ENCODE measurements at regions of chr6 and their contacts with region 1.

Region 1: DNA sequence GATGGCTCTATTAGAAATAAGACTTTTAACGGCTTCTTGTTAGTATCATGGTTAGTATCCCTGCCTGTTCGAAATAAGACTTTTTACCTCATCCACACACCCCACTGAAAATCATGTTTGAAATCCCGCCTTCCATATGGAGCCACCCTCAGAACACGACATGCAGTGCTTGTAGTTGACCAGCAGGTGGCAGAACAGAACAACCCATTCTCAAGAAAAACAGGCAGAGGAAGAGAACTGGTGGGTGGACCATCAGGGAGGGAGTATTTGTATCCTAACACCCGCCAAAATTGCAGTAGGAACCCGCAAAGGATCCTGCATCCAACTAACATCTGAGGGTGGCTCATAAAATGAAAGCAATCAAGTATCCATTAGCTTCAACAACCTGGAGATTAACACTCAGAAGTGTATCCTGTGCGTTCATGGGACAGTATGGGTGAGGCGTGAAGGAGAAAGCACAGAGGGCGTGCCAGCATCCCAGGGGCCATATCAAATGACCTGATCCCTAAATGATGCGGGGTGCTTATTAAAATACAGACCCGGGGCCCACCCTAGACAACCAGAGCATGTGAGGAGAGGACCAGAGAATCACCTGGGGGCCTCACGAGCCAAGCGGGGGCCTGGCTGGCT is 89.6 kb upstream of the NHSL1 start:
- DNase-seq: peak; percentile 76
- ATAC-seq: peak; percentile 68
- H3K4me3 ChIP-seq: no peak overlapping the region
- H3K4me3 Mint-ChIP-seq: no peak overlapping the region
- H3K27ac ChIP-seq: no peak overlapping the region
- H3K27ac Mint-ChIP-seq: no peak overlapping the region
- H3K4me1 ChIP-seq: peaks cover 12 to 13% of the 10 kb centered on the region in 2 donors
- H3K4me1 Mint-ChIP-seq: peaks cover 20% of the 10 kb centered on the region
- H3K27me3 ChIP-seq: no peaks in the 10 kb centered on the region
- H3K27me3 Mint-ChIP-seq: no peaks in the 10 kb centered on the region
- CTCF ChIP-seq: peak; percentile 92

Region 2: DNA sequence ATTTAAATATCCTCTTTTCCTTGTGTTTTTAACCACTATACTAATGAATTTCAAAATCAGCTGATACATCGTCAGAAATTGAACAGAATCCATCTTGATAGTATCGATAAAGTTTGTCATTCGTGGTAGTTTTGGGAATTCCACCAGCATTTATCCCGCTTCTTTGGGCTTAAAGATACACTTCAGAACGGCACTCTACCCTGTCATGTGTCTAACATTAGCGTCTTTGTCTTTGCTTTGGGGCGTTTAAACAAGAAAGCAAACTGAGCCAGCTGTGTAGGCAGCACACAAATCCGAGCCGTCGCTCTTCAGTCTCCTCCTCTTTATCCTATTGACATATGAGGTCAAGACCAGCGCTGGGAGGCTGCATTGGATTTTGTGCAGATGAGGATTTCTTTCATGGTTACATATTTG is 62.1 kb before region 1 on chr6:
- CTCF ChIA-PET with region 1: no interaction called
- POLR2A ChIA-PET with region 1: no interaction called
- intact Hi-C with region 1: no loop called
- DNase-seq: no peak
- ATAC-seq: no peak
- H3K4me3 ChIP-seq: no peak overlapping the region
- H3K4me3 Mint-ChIP-seq: no peak overlapping the region
- H3K27ac ChIP-seq: no peak overlapping the region
- H3K27ac Mint-ChIP-seq: no peak overlapping the region
- H3K4me1 ChIP-seq: no peaks in the 10 kb centered on the region
- H3K4me1 Mint-ChIP-seq: no peaks in the 10 kb centered on the region
- H3K27me3 ChIP-seq: no peaks in the 10 kb centered on the region
- H3K27me3 Mint-ChIP-seq: peaks cover 8% of the 10 kb centered on the region
- CTCF ChIP-seq: no peak

Region 3: DNA sequence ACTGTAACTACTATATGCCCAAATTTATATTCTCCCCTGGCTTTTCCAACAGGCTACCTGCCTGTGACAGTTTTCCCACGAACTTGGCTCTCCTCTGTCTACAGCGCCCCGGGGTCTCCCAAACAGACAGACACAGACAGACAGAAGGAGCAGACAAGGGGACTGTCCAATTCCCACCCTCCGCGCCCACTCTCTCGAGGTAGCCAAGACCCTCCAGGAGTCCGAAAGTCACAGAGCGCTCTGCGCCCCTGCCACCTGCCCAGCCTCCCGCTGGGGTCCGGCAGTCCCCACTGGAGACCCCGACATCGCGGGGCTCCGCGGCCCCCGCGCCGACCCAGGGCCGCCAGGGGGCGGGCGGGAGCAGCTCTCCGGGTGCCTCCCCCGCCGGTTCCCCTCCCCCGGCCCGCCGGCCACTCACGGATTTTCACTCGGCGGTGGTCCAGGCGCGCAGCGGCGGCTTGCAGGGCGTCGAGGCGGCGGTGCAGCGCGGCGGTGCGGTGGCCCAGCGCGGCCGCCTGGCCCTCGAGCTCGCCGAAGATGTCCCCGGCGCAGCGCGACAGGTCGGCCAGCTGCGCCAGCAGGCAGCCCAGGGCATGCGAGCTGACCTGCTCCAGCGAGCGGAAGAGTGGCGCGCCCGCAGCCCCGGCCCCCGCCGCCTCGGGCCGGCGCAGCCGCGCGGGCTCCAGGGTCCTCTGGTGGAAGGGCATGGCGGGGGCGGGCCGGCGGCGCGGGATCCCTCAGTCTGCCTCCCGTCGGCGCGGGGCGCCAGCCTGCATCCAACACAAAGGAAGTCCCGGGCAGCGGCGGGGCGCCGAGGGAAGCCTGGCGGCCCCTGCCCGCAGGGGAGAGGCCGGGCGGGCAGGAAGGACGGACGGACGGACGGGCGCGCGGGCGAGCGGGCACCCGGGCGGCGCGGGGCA is 103.4 kb after region 1 on chr6:
- CTCF ChIA-PET with region 1: interaction called, 13 read pairs
- POLR2A ChIA-PET with region 1: no interaction called
- intact Hi-C with region 1: loop called (anchors 2 kb)
- DNase-seq: peak; percentile 76
- ATAC-seq: peak; percentile 76
- H3K4me3 ChIP-seq: peak overlapping the region in 4 of 5 experiments; percentile 7 to 76 (median 64)
- H3K4me3 Mint-ChIP-seq: peak overlapping the region; percentile 86
- H3K27ac ChIP-seq: no peak overlapping the region
- H3K27ac Mint-ChIP-seq: no peak overlapping the region
- H3K4me1 ChIP-seq: peaks cover 9 to 11% of the 10 kb centered on the region in 2 donors
- H3K4me1 Mint-ChIP-seq: peaks cover 10% of the 10 kb centered on the region
- H3K27me3 ChIP-seq: peaks cover 0 to 28% (median 12%) of the 10 kb centered on the region in 4 experiments
- H3K27me3 Mint-ChIP-seq: peaks cover 31% of the 10 kb centered on the region
- CTCF ChIP-seq: peak; percentile 84

Region 4: GRCh38 chr6:138765896-138766655 is 177.2 kb after region 1 on chr6:
- CTCF ChIA-PET with region 1: interaction called, 235 read pairs
- POLR2A ChIA-PET with region 1: no interaction called
- intact Hi-C with region 1: loop called (anchors 1 kb)
- DNase-seq: peak; percentile 57
- ATAC-seq: peak; percentile 47
- H3K4me3 ChIP-seq: no peak overlapping the region
- H3K4me3 Mint-ChIP-seq: no peak overlapping the region
- H3K27ac ChIP-seq: no peak overlapping the region
- H3K27ac Mint-ChIP-seq: no peak overlapping the region
- H3K4me1 ChIP-seq: peaks cover 9 to 13% of the 10 kb centered on the region in 2 donors
- H3K4me1 Mint-ChIP-seq: peaks cover 5% of the 10 kb centered on the region
- H3K27me3 ChIP-seq: no peaks in the 10 kb centered on the region
- H3K27me3 Mint-ChIP-seq: no peaks in the 10 kb centered on the region
- CTCF ChIP-seq: peak; percentile 84

Region 5: DNA sequence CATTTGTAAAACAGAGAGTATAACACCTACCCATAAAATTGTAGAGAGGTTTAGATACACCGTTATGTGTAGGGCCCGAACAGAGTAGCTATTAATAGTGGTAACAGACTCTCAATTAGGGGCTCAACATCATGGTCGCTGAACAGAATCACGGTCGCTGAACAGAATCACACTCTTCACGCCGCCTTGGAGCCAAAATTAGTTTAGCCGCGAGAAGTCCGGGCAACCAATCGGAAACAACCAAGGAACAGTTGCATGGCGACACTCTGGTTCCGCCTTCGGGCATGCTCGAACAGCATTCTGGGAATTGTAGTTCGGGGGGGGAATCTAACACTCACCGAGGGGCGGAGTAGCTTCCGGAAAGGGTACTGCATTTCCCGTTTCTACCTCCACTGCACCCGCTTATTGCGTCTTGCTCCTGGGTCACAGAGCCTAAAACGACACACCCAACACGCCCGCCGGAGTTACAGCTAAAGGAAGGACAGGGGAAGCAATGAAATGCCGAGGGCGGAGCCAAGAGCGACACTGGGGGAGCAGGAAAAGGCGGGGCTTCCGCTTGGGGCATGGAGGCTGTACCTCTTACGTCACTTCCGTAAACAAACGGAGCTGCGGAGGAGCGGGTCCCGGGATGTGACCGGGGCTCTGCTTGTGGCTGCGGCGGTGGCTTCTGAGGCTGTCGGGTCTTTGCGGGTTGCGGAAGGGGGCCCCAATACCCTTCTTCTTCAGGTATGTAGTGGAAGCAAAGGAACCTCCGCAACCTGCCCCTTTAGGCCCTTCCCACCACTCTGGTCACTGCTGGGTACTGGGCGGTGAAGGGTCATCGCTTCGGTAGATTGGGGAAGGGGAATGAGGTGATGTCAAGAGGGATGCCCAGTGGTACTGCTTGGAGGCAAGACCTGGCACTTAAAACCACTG is 184.5 kb after region 1 on chr6 and contains the start of gene CCDC28A:
- CTCF ChIA-PET with region 1: interaction called, 235 read pairs
- POLR2A ChIA-PET with region 1: no interaction called
- intact Hi-C with region 1: loop called (anchors 1 kb)
- DNase-seq: peak; percentile 97
- ATAC-seq: peak; percentile 84
- H3K4me3 ChIP-seq: peak within 1 kb of the TSS; percentile 83 to 98 (median 86)
- H3K4me3 Mint-ChIP-seq: peak within 1 kb of the TSS; percentile 99
- H3K27ac ChIP-seq: peak within 1 kb of the TSS; percentile 92 to 97
- H3K27ac Mint-ChIP-seq: peak within 1 kb of the TSS; percentile 99
- H3K4me1 ChIP-seq: peaks cover 21 to 28% of the 10 kb centered on the region in 2 donors
- H3K4me1 Mint-ChIP-seq: peaks cover 32% of the 10 kb centered on the region
- H3K27me3 ChIP-seq: no peaks in the 10 kb centered on the region
- H3K27me3 Mint-ChIP-seq: no peaks in the 10 kb centered on the region
- CTCF ChIP-seq: no peak
- total RNA-seq, gene CCDC28A: 26.3 and 26.9 TPM in 2 replicates

Measured in B cell (primary cell).